GM10248 (cell line): ENCODE measurements at regions of chr17 and their contacts with region 1.

Region 1: GRCh38 chr17:41665566-41666236 is 23.0 kb upstream of the EIF1 start:
- DNase-seq: peak; percentile 93
- CTCF ChIP-seq: peak; percentile 95

Region 2: DNA sequence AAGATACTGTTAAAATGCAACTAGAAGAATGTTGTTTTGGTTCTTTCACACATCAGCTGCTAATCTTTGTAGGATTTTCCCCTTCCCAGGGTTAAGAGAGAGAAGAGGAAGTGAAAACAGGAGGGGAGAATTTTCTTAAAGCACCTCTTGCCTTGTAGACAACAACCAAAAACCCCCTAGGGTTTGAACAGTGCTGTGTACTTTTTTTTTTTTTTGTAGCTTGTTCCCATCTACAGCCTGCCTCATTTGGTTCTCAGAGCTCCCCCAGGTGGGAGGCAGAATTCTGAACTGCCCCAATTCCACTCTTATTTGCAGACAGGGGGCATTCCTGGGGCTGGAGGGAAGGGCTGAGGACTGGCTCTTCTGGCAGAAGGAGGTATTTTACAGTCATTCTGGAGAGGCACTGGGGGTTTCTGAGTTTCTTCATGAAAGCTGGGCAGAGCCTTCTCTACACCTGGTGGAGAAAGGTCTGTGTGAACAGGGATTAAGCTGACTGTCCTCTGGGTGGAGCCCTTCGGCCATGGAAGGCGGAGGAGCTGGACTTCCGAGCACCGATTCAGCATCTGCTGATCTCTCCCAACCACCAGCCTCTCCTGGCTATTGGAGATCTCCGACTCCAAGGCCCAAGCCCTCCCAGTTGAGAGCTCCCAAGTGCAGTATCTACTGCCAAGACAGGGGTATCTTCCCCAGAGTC is 1050.3 kb before region 1 on chr17:
- CTCF ChIA-PET with region 1: interaction called, 14 read pairs
- POLR2A ChIA-PET with region 1: no interaction called
- DNase-seq: peak; percentile 81
- CTCF ChIP-seq: peak; percentile 61

Region 3: GRCh38 chr17:40806943-40807342 is 858.8 kb before region 1 on chr17:
- CTCF ChIA-PET with region 1: interaction called, 16 read pairs
- POLR2A ChIA-PET with region 1: no interaction called
- DNase-seq: no peak
- CTCF ChIP-seq: no peak

Region 4: DNA sequence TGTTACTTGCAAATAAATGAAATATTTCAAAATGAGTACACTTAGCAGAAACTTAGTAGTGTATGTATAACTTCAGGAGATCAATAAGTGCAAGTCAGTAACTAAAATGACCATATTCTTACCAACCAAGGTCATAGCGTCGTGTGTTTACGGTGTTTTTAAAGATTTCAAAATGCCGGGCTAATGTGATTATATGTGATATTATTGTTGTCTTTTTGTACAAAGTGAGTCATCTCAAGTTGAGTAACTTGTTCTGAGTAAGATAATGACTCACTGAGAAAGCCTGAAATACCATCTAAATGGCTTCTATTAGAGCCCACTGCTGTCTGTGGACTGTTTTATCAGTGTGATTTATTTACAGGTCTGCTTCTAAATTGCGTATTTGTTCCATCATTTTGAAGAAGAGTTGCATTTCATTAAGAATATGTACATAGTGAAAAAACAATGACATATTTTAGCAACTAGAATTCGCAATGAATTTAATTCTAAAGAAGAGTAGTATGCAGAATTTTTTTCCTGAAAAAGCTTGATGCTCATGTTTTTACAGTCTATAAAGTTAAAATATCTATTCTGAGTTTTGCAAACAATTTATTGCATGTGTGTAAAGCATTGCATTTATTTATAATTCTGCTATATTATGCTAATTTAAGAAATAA is 811.4 kb before region 1 on chr17:
- CTCF ChIA-PET with region 1: interaction called, 57 read pairs
- POLR2A ChIA-PET with region 1: no interaction called
- DNase-seq: no peak
- CTCF ChIP-seq: no peak

Region 5: GRCh38 chr17:41559548-41559947 is 106.2 kb before region 1 on chr17:
- CTCF ChIA-PET with region 1: interaction called, 13 read pairs
- POLR2A ChIA-PET with region 1: no interaction called
- DNase-seq: no peak
- CTCF ChIP-seq: no peak

Region 6: GRCh38 chr17:41642252-41643156 is 23.2 kb before region 1 on chr17:
- CTCF ChIA-PET with region 1: interaction called, 533 read pairs
- POLR2A ChIA-PET with region 1: no interaction called
- DNase-seq: no peak
- CTCF ChIP-seq: no peak

Region 7: DNA sequence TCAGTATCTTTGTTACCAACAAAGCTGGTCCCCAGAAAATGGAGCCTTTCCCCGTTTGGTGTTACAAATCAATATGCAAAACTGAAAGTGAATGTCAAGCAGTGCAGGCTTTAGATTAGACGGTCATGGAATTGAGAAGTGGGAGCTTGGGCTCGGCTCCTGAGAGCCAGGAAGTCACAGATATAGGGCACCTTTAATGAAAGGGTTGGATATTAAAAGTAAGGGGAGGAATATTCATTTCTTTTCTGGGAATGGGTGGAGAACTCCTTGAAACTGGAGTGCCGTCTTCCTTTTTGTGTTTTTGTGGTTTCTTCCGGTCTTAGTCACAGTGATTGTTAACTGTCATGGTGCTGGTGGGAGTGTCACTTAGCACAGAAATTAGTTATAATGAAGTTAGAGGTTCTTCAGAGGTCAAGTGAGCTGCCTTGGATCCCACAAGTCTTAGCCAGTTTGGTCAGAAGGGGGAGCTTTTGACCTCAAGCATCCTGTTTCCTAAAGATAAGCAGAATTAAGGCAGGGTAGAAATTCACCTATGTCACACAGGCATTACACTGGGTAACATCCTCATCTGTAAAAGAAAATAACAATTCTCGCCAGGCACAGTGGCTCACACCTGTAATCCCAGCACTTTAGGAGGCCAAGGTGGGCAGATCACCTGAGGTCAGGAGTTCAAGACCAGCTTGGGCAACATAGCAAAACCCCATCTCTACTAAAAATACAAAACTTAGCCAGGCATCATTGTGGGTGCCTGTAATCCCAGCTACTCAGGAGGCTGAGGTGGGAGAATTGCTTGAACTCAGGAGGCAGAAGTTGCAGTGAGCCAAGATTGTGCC is 13.4 kb after region 1 on chr17:
- CTCF ChIA-PET with region 1: interaction called, 118 read pairs
- POLR2A ChIA-PET with region 1: interaction called, 7 read pairs
- DNase-seq: no peak
- CTCF ChIP-seq: peak; percentile 61